ENCODE measurements at regions of chr7 and their contacts with region 1.

Region 1: GRCh38 chr7:77798394-77799077 is at the starts of genes PHTF2 and TMEM60:
- DNase-seq: peak; percentile 99 to 100
- H3K4me3 ChIP-seq: peak within 1 kb of the TSS; percentile 96
- H3K27ac ChIP-seq: peak within 1 kb of the TSS; percentile 41
- H3K4me1 ChIP-seq: peaks cover 35% of the 10 kb centered on the region
- H3K27me3 ChIP-seq: no peaks in the 10 kb centered on the region
- CTCF ChIP-seq: peak; percentile 45; the same call in 1 of the 2 replicates
- total RNA-seq, gene PHTF2: 36.4 and 52.0 TPM in 2 replicates
- total RNA-seq, gene TMEM60: 19.5 and 29.1 TPM in 2 replicates

Region 2: GRCh38 chr7:77580762-77581350 is 217.7 kb before region 1 on chr7:
- CTCF ChIA-PET with region 1: no interaction called
- POLR2A ChIA-PET with region 1: no interaction called
- intact Hi-C with region 1: no loop called
- DNase-seq: no peak
- H3K4me3 ChIP-seq: no peak overlapping the region
- H3K27ac ChIP-seq: no peak overlapping the region
- H3K4me1 ChIP-seq: no peaks in the 10 kb centered on the region
- H3K27me3 ChIP-seq: no peaks in the 10 kb centered on the region
- CTCF ChIP-seq: no peak

Region 3: DNA sequence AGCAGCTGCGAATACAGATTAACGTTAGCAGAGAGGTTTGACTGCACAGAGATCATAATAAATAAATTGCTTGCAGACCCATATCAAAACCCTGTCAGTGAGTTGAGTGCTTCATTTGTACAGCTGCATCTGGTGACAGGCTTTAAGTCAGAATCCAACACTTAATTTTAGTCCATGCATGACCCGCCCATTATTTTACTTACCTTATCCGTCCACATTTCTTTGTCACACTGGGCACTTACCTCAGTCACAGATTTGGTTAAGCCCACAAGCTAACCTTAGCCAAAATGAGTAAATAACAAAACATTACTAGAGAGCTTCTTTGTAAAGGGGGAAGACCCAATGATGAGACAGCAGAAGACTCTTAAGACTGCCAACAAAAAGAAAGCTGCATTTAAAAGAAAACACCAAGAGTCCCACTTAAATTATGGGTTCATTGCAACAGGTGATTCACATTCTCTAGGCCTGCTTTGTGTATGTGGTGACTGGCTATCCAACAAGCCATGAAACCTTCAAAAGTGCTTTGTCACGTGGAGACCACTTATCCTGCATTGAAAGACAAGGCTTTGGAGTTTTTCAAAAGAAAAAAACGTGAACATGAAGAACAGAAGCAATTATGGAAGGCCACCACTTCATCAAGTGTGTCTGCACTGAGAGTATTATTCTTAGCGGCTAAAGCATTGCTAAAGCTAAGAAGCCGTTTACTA is 32.3 kb after region 1 on chr7:
- CTCF ChIA-PET with region 1: interaction called, 7 read pairs
- POLR2A ChIA-PET with region 1: no interaction called
- intact Hi-C with region 1: loop called (anchors 1 kb)
- DNase-seq: no peak
- H3K4me3 ChIP-seq: no peak overlapping the region
- H3K27ac ChIP-seq: no peak overlapping the region
- H3K4me1 ChIP-seq: peaks cover 23% of the 10 kb centered on the region
- H3K27me3 ChIP-seq: no peaks in the 10 kb centered on the region
- CTCF ChIP-seq: no peak

Region 4: DNA sequence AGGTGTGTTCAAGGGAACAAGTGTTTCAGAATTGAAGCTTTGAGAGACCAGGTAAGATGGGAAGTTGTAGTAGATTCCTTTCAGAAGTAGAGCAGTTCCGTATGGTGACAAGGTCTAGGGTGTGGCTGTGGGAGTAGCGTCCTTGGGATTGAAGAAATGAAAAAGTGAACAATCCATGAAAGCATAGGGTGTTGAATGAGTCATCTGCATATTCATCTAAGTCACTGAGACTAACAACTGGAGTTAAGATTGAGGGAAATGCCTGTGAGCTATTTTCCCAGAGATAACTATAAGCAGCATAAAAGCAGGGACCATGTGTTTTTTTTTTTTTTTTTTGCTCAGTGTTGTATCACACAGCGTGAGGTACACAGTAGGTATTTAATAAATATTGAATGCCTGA is 134.9 kb after region 1 on chr7:
- CTCF ChIA-PET with region 1: no interaction called
- POLR2A ChIA-PET with region 1: no interaction called
- intact Hi-C with region 1: loop called (anchors 2 kb)
- DNase-seq: no peak
- H3K4me3 ChIP-seq: no peak overlapping the region
- H3K27ac ChIP-seq: no peak overlapping the region
- H3K4me1 ChIP-seq: no peaks in the 10 kb centered on the region
- H3K27me3 ChIP-seq: no peaks in the 10 kb centered on the region
- CTCF ChIP-seq: no peak

Region 5: DNA sequence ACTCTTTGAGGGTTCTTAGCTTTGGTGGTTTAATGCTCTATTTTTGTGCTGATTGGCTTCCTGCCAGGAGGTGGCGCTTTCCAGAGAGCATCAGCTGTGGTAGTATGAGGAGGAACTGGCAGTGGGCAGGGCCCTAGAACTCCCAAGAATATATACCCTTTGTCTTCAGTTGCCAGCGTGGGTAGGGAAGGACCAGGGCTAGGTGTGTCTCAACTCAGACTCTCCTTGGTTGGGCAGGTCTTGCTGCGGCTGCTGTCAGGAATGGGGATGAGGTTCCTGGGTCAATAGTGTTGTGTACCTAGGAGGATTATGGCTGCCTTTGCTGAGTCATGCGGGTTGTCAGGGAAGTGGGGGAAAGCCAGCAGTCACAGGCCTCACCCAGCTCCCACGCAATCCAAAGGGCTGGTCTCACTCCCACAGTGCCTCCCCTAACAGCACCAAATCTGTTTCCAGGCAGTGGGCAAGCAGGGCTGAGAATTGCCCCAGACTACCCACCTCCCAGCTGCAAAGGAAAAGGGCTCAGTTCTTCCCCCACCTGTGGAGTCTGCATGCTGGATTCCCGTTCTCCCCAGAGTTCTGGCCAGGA is 191.5 kb after region 1 on chr7:
- CTCF ChIA-PET with region 1: no interaction called
- POLR2A ChIA-PET with region 1: no interaction called
- intact Hi-C with region 1: loop called (anchors 2 kb)
- DNase-seq: peak; percentile 72 to 81
- H3K4me3 ChIP-seq: no peak overlapping the region
- H3K27ac ChIP-seq: 0 out of 2 replicates have a peak overlapping the region, but pooled peaks have one; percentile 32
- H3K4me1 ChIP-seq: peaks cover 11% of the 10 kb centered on the region; the same call in 1 of the 2 replicates
- H3K27me3 ChIP-seq: no peaks in the 10 kb centered on the region
- CTCF ChIP-seq: no peak

Region 6: DNA sequence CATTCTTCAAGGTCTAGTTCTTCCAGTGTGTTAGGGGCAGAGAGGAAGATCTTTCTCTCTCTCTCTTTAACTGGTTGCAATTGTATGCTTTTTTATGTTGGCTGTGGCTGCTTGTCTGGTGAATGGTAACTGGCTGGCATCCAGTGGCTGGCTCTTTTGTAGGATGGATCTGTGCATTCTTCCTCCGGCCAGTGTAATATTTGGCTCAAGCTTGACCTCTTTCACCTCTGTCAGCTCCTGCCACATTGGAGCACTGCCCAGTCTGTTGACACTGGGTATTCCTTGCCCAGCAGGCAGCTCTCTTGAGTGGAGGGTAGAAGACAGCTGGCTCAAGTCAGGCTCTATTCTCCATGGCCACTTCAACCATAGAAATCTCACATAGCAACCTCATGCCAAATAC is 528.3 kb after region 1 on chr7:
- CTCF ChIA-PET with region 1: no interaction called
- POLR2A ChIA-PET with region 1: no interaction called
- intact Hi-C with region 1: loop called (anchors 5 kb)
- DNase-seq: peak in 1 of 2 experiments; percentile 70
- H3K4me3 ChIP-seq: no peak overlapping the region
- H3K27ac ChIP-seq: no peak overlapping the region
- H3K4me1 ChIP-seq: no peaks in the 10 kb centered on the region
- H3K27me3 ChIP-seq: no peaks in the 10 kb centered on the region
- CTCF ChIP-seq: no peak